K562 (cell line): ENCODE measurements at regions of chr16 and their contacts with region 1.

Region 1: GRCh38 chr16:5490499-5490898 is 392.9 kb upstream of the EEF2KMT start:
- DNase-seq: peak; percentile 59 to 77 (median 73)
- ATAC-seq: peak; percentile 78
- H3K4me3 ChIP-seq: no peak overlapping the region
- H3K27ac ChIP-seq: no peak overlapping the region
- H3K4me1 ChIP-seq: peaks cover 0 to 3% of the 10 kb centered on the region in 2 experiments; a peak in 1 of 5 replicates
- H3K27me3 ChIP-seq: no peaks in the 10 kb centered on the region
- CTCF ChIP-seq: peak; percentile 79 to 95 (median 85)
- EP300 ChIP-seq: no peak
- POLR2A ChIP-seq: no peak
- RAD21 ChIP-seq: peak; percentile 26 to 76

Region 2: GRCh38 chr16:5234295-5235050 is 256.0 kb before region 1 on chr16:
- CTCF ChIA-PET with region 1: no interaction called
- POLR2A ChIA-PET with region 1: no interaction called
- in situ Hi-C with region 1: loop called (anchors 25 kb)
- intact Hi-C with region 1: loop called (anchors 5 kb)
- DNase-seq: no peak
- ATAC-seq: no peak
- H3K4me3 ChIP-seq: no peak overlapping the region
- H3K27ac ChIP-seq: no peak overlapping the region
- H3K4me1 ChIP-seq: peaks cover 0 to 1% of the 10 kb centered on the region in 2 experiments; a peak in 1 of 5 replicates
- H3K27me3 ChIP-seq: peaks cover 2 to 6% of the 10 kb centered on the region in 2 experiments; a peak in 2 of 5 replicates
- CTCF ChIP-seq: no peak
- EP300 ChIP-seq: no peak
- POLR2A ChIP-seq: no peak
- RAD21 ChIP-seq: no peak